Ascending aorta (tissue), 2 donors: ENCODE measurements at regions of chr12 and their contacts with region 1.

Region 1: GRCh38 chr12:63802012-63802608 is 22.4 kb downstream of the RXYLT1 start:
- DNase-seq: no peak
- H3K4me3 ChIP-seq: no peak overlapping the region
- H3K27ac ChIP-seq: no peak overlapping the region
- H3K4me1 ChIP-seq: no peaks in the 10 kb centered on the region
- H3K27me3 ChIP-seq: no peaks in the 10 kb centered on the region
- CTCF ChIP-seq: peak; percentile 12 to 58 (median 46)

Region 2: GRCh38 chr12:63103494-63104131 is 698.5 kb before region 1 on chr12:
- intact Hi-C with region 1: loop called (anchors 2 kb)
- DNase-seq: no peak
- H3K4me3 ChIP-seq: no peak overlapping the region
- H3K27ac ChIP-seq: no peak overlapping the region
- H3K4me1 ChIP-seq: no peaks in the 10 kb centered on the region
- H3K27me3 ChIP-seq: no peaks in the 10 kb centered on the region
- CTCF ChIP-seq: peak; percentile 40 to 77 (median 66)

Region 3: DNA sequence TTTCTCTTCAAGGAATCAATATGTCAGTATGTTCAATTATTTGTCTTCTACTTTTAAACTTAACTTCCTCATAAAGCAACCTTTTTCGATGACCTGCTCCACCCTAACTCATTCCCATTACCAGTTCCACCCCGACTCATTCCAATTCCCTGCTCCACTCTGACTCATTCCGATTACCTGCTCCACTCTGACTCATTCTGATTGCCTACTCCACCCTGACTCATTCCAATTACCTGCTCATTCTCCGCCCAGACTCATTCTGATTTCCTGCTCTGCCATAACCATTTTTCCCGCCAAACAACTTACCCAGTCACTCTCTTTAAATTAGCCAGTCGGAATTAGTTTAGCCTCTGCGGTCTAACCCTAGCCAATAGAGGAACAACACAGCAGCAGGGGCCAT is 383.0 kb before region 1 on chr12:
- intact Hi-C with region 1: loop called (anchors 10 kb)
- DNase-seq: no peak
- H3K4me3 ChIP-seq: no peak overlapping the region
- H3K27ac ChIP-seq: no peak overlapping the region
- H3K4me1 ChIP-seq: no peaks in the 10 kb centered on the region
- H3K27me3 ChIP-seq: no peaks in the 10 kb centered on the region
- CTCF ChIP-seq: no peak

Region 4: GRCh38 chr12:63668028-63668799 is 133.9 kb before region 1 on chr12 and contains the start of gene DPY19L2:
- intact Hi-C with region 1: loop called (anchors 5 kb)
- DNase-seq: peak; percentile 12 to 73
- H3K4me3 ChIP-seq: peak within 1 kb of the TSS; percentile 62 to 75
- H3K27ac ChIP-seq: peak within 1 kb of the TSS; percentile 53 to 71
- H3K4me1 ChIP-seq: no peaks in the 10 kb centered on the region
- H3K27me3 ChIP-seq: no peaks in the 10 kb centered on the region
- CTCF ChIP-seq: no peak
- total RNA-seq, gene DPY19L2: 3.2 TPM

Region 5: DNA sequence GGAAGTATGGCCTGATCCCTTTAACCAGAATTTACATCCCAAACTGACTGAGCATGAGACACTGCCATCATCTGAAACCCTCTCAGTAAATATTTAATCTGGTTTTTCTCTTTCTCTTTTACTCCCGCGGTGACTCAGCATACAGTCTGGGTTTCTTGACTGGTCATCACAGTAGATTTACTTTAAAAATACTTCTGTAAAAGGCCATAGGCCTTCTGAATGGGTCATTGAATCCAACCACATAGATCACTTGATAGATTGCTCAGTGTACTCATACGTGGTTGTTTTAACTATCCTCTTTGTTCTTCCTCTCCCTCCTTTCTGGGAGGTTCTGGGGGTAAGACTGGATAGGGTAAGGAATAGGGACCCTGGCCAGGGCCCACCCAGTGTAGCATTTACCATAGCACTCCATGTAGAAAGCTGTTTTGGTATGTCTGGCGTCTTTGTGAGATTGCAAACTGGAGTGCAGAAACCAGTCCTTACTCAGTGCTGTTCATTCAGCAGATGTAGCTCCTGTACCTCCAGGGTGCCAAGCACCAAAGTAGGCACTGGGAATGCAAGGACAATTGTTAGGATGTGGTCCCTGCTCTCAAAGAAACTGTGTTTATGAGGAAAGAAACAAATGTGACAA is 208.1 kb after region 1 on chr12:
- intact Hi-C with region 1: no loop called
- DNase-seq: no peak
- H3K4me3 ChIP-seq: no peak overlapping the region
- H3K27ac ChIP-seq: no peak overlapping the region
- H3K4me1 ChIP-seq: no peaks in the 10 kb centered on the region
- H3K27me3 ChIP-seq: no peaks in the 10 kb centered on the region
- CTCF ChIP-seq: no peak